Head of caudate nucleus (tissue), 42 donors: ENCODE measurements at regions of chr3 and their contacts with region 1.

Region 1: GRCh38 chr3:149129326-149130205 is at the start of gene HPS3:
- DNase-seq: peak; percentile 85 to 97 (median 93)

Region 2: GRCh38 chr3:148815316-148816110 is 314.1 kb before region 1 on chr3:
- intact Hi-C with region 1: no loop called
- DNase-seq: peak in 28 of 42 donors; percentile 6 to 69 (median 27)

Region 3: DNA sequence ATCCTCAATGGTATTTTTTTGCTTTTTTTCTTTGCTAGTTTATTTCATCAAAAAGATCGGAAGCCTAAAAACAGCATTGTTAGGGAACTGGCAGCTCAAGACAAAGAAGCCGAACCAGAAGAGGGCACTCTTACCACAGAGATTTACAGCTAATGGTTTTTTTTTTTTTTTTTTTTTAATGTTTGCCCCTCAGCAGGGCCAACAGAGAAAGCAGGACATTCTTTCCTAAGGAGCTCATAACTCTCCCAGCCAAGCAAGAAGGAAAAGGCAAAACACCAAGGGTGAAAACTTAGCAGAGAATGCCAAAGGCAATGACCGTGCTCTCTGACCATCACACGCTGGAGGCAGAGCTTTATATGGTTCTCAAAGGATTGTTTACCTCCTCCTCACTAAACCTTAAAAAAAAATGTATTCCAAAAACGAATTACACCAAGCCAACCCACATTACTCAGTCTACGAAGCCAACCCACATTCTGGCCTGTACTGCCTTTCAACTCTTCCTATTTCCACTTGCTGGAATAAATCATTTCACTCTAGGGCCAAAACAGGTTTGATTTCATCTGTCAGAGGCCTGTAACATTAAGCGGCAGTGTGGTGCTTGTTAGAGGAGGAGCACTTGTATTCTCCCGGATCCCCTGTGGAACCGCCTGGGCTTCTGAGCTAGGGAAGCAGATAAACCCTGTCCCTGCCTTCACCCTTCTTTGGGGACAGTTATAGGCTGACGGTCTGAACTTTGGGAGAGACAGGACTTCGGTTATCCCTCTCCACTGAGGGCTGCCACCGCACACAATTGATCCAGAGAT is 173.8 kb before region 1 on chr3:
- intact Hi-C with region 1: loop called (anchors 10 kb)
- DNase-seq: peak in 19 of 42 donors; percentile 11 to 80 (median 48)